Mammary epithelial cell (primary cell): ENCODE measurements at regions of chr5 and their contacts with region 1.

Region 1: DNA sequence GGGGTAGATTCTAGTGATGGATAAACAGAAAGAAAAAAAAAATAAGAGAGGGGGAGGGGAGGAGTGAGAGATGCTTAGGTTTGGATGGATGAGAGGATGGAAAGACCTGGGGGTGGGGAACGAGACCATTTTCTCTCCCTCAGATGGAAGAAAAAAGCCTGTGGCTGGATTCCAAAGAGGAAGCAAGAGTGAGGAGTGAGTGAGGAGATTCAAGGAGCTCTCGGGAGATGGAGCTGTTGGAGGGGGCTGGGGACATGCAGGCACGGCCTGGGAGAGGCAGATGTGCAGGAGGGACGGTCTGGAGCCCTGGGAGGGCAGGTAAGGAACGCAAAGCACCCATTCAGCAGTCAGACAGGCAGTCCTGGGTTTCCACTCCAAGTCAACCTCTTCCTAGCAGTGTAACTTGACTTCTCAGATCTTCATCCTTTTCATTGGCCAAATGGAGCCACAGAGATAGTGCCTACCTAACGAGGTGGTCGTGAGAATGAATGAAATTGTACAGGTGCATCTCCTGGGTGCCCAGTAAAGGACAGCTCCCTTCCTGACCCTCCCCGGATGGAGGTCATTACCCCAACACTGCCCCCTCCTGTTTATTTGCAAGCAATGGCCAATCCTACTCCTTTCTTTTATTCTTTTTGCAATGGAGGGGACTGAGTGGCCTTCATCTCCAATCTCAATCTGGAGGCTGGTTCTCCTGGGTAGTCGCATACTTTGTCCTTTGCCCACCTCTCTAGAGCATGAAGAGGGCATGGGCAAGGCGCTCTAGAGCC is 52.2 kb downstream of the PCDH1 start:
- DNase-seq: no peak
- H3K4me3 ChIP-seq: no peak overlapping the region
- H3K27ac ChIP-seq: no peak overlapping the region
- H3K4me1 ChIP-seq: peaks cover 4% of the 10 kb centered on the region
- H3K27me3 ChIP-seq: no peaks in the 10 kb centered on the region
- CTCF ChIP-seq: peak; percentile 36 to 38

Region 2: GRCh38 chr5:141664732-141665461 is 161.1 kb before region 1 on chr5:
- CTCF ChIA-PET with region 1: interaction called, 4 read pairs
- dilution Hi-C with region 1: loop called (anchors 5 kb)
- in situ Hi-C with region 1: no loop called
- intact Hi-C with region 1: no loop called
- DNase-seq: no peak
- H3K4me3 ChIP-seq: no peak overlapping the region
- H3K27ac ChIP-seq: no peak overlapping the region
- H3K4me1 ChIP-seq: no peaks in the 10 kb centered on the region
- H3K27me3 ChIP-seq: no peaks in the 10 kb centered on the region
- CTCF ChIP-seq: peak; percentile 84 to 91

Region 3: DNA sequence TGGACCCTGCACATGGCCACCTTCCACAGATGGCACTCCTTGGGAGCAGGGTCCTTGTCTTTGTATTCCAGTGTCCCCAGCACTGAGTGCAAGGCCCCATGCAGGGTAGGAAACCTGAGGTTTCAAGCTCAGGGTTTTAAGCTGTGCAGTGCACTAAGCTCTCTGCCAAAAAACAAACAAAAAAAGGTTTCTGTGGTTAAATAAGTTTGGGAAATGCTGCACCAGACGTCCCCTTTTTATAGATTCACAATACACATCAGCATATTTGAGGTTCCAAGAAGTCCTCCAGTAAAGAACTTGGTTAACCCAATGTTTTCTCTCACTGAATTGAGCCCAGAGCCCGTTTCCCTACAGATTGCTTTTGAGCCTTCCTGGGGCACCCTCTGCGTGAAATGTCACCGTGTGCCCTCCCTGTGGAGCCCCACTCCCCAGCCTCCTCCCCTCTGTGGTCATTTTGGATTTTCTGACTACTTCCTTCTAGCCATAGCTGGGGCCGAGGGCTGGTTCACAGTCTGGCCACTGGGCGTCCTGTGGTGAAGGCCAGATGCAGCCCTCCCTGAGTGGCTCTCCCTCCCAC is 114.8 kb after region 1 on chr5:
- CTCF ChIA-PET with region 1: no interaction called
- dilution Hi-C with region 1: no loop called
- in situ Hi-C with region 1: no loop called
- intact Hi-C with region 1: no loop called
- DNase-seq: no peak
- H3K4me3 ChIP-seq: no peak overlapping the region
- H3K27ac ChIP-seq: no peak overlapping the region
- H3K4me1 ChIP-seq: peaks cover 30% of the 10 kb centered on the region
- H3K27me3 ChIP-seq: no peaks in the 10 kb centered on the region
- CTCF ChIP-seq: no peak